ENCODE measurements at regions of chr7 and their contacts with region 1.

Region 1: DNA sequence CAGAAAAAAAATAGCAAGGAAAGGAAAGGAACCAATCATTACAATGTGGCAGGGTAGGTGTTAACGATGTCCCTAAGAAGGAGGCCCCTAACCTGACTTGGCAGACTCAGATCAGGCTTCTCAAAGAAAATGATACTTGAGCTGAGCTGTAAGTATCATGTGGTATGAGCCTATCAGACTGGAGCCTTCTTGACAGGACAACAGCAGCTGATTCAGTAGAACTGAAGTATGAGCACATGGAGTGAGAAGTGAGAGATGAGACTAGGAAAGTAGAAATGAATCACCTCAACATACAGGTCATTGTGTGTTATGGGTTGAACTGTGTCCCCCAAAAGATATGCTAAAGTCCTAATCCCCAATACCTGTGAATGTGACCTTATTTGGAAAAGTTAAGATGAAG is 66.3 kb downstream of the MTERF1 start:
- DNase-seq: no peak
- H3K4me3 ChIP-seq: no peak overlapping the region
- CTCF ChIP-seq: no peak

Region 2: DNA sequence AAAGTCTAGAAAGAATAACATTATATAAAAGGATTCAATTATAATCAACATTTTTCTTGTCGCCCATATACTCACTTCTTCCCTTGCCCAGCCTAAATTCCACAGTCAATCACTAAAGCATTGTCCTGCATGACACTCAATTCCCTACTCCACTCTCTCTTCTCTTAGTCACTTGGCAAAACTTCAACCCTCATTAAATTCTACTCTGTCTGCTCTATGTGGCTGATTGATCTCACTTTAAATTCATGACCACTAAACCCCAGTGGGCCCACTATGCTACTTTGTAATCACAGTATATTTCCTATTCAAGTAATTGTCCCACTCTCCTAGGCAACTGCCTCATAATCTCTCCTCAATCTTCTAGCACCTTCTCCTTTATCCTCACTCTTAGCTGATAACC is 12.2 kb after region 1 on chr7:
- CTCF ChIA-PET with region 1: interaction called, 13 read pairs
- POLR2A ChIA-PET with region 1: no interaction called
- DNase-seq: no peak
- H3K4me3 ChIP-seq: no peak overlapping the region
- CTCF ChIP-seq: no peak

Measured in AG04449 (cell line).